Spleen (tissue), 13 donors: ENCODE measurements at regions of chr4 and their contacts with region 1.

Region 1: GRCh38 chr4:118888666-118889311 is at the start of gene SYNPO2:
- DNase-seq: peak; percentile 82
- H3K4me3 ChIP-seq: peak within 1 kb of the TSS; percentile 32 to 69 (median 38)
- H3K27ac ChIP-seq: peak within 1 kb of the TSS in 7 of 8 donors; percentile 53 to 69 (median 61)
- H3K4me1 ChIP-seq: peaks cover 5 to 18% (median 14%) of the 10 kb centered on the region in 6 donors
- H3K27me3 ChIP-seq: peaks cover 0 to 31% (median 5%) of the 10 kb centered on the region in 7 donors
- CTCF ChIP-seq: no peak
- POLR2A ChIP-seq: no peak
- total RNA-seq, gene SYNPO2: 24.7 to 72.1 (median 36.9) TPM

Region 2: GRCh38 chr4:118769161-118769560 is 119.6 kb before region 1 on chr4:
- intact Hi-C with region 1: loop called (anchors 2 kb)
- DNase-seq: no peak
- H3K4me3 ChIP-seq: no peak overlapping the region
- H3K27ac ChIP-seq: peak overlapping the region in 5 of 8 donors; percentile 8 to 47 (median 29)
- H3K4me1 ChIP-seq: peaks cover 0 to 27% (median 11%) of the 10 kb centered on the region in 6 donors
- H3K27me3 ChIP-seq: no peaks in the 10 kb centered on the region
- CTCF ChIP-seq: no peak
- POLR2A ChIP-seq: no peak

Region 3: DNA sequence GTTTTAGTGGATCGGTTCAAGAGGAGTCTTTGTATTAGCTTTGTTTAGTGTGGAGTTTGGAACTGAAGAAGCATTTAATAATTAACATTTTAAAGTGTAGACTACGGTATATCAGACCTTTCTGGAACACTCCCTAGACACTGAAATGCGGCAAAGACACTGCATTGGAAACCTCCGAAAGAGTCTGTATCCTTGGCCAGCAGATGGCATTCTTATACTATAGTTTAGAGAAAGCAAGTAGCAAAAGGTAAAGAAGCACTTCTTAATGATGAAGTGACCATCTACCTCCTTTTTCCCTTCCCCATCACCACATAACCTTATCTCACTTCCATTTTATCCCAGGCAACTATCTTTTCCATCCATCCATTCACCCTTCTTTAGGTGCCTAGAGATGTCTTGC is 425.6 kb after region 1 on chr4:
- intact Hi-C with region 1: no loop called
- DNase-seq: no peak
- H3K4me3 ChIP-seq: no peak overlapping the region
- H3K27ac ChIP-seq: peak overlapping the region in 1 of 8 donors; percentile 51
- H3K4me1 ChIP-seq: peaks cover 0 to 23% (median 5%) of the 10 kb centered on the region in 6 donors
- H3K27me3 ChIP-seq: peaks cover 0 to 12% (median 0%) of the 10 kb centered on the region in 7 donors
- CTCF ChIP-seq: peak; percentile 18 to 73 (median 53)
- POLR2A ChIP-seq: no peak